ENCODE measurements at regions of chr2 and their contacts with region 1.

Region 1: GRCh38 chr2:212005085-212005671 is 533.4 kb downstream of the ERBB4 start:
- DNase-seq: no peak
- ATAC-seq: peak; percentile 89
- H3K4me3 ChIP-seq: no peak overlapping the region
- H3K27ac ChIP-seq: no peak overlapping the region
- H3K4me1 ChIP-seq: no peaks in the 10 kb centered on the region
- H3K27me3 ChIP-seq: no peaks in the 10 kb centered on the region
- CTCF ChIP-seq: peak; percentile 51 to 62 (median 51)
- EP300 ChIP-seq: no peak
- POLR2A ChIP-seq: no peak
- RAD21 ChIP-seq: peak; percentile 70

Region 2: GRCh38 chr2:211745295-211746097 is 259.7 kb before region 1 on chr2:
- CTCF ChIA-PET with region 1: interaction called, 3 read pairs
- POLR2A ChIA-PET with region 1: no interaction called
- RAD21 ChIA-PET with region 1: interaction called, 4 read pairs
- SMC1A ChIA-PET with region 1: interaction called, 4 read pairs
- in situ Hi-C with region 1: no loop called
- intact Hi-C with region 1: loop called (anchors 10 kb)
- DNase-seq: no peak
- ATAC-seq: peak; percentile 94
- H3K4me3 ChIP-seq: no peak overlapping the region
- H3K27ac ChIP-seq: no peak overlapping the region
- H3K4me1 ChIP-seq: no peaks in the 10 kb centered on the region
- H3K27me3 ChIP-seq: no peaks in the 10 kb centered on the region; a peak in 1 of 4 replicates
- CTCF ChIP-seq: peak; percentile 78 to 87 (median 86)
- EP300 ChIP-seq: no peak
- POLR2A ChIP-seq: no peak
- RAD21 ChIP-seq: peak; percentile 97

Region 3: DNA sequence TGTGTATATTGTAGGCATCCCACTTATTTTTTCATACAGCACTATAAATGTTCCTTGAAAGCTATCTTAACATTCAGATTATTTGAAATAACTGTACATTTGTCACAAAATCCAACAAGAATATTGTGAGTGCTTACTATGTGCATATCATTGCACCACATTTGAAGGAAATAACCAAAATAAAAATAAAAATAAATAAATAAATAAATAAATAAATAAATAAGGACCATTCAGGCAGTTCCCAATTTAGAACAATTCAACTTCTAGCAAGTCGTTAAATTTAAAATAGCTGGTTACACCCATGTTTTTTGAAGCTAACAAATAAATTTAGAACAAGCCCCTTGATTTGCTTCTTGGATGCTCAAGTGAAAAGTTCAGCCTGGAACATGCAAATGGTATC is 14.8 kb before region 1 on chr2:
- CTCF ChIA-PET with region 1: interaction called, 16 read pairs
- POLR2A ChIA-PET with region 1: no interaction called
- RAD21 ChIA-PET with region 1: interaction called, 3 read pairs
- SMC1A ChIA-PET with region 1: interaction called, 11 read pairs
- in situ Hi-C with region 1: no loop called
- intact Hi-C with region 1: no loop called
- DNase-seq: no peak
- ATAC-seq: no peak
- H3K4me3 ChIP-seq: no peak overlapping the region
- H3K27ac ChIP-seq: no peak overlapping the region
- H3K4me1 ChIP-seq: no peaks in the 10 kb centered on the region
- H3K27me3 ChIP-seq: no peaks in the 10 kb centered on the region
- CTCF ChIP-seq: no peak
- EP300 ChIP-seq: no peak
- POLR2A ChIP-seq: no peak
- RAD21 ChIP-seq: no peak

Region 4: GRCh38 chr2:212027681-212028628 is 22.8 kb after region 1 on chr2:
- CTCF ChIA-PET with region 1: interaction called, 15 read pairs
- POLR2A ChIA-PET with region 1: no interaction called
- RAD21 ChIA-PET with region 1: interaction called, 8 read pairs
- SMC1A ChIA-PET with region 1: interaction called, 6 read pairs
- in situ Hi-C with region 1: no loop called
- intact Hi-C with region 1: no loop called
- DNase-seq: no peak
- ATAC-seq: peak; percentile 72
- H3K4me3 ChIP-seq: no peak overlapping the region
- H3K27ac ChIP-seq: no peak overlapping the region
- H3K4me1 ChIP-seq: no peaks in the 10 kb centered on the region
- H3K27me3 ChIP-seq: no peaks in the 10 kb centered on the region
- CTCF ChIP-seq: no peak
- EP300 ChIP-seq: no peak
- POLR2A ChIP-seq: no peak
- RAD21 ChIP-seq: no peak

Region 5: GRCh38 chr2:212147921-212148513 is 142.8 kb after region 1 on chr2:
- CTCF ChIA-PET with region 1: interaction called, 6 read pairs
- POLR2A ChIA-PET with region 1: no interaction called
- RAD21 ChIA-PET with region 1: interaction called, 6 read pairs
- SMC1A ChIA-PET with region 1: interaction called, 10 read pairs
- in situ Hi-C with region 1: no loop called
- intact Hi-C with region 1: no loop called
- DNase-seq: no peak
- ATAC-seq: no peak
- H3K4me3 ChIP-seq: no peak overlapping the region
- H3K27ac ChIP-seq: no peak overlapping the region
- H3K4me1 ChIP-seq: no peaks in the 10 kb centered on the region
- H3K27me3 ChIP-seq: no peaks in the 10 kb centered on the region; a peak in 1 of 4 replicates
- CTCF ChIP-seq: peak in 1 of 3 experiments; percentile 25; a peak in 2 of 6 replicates
- EP300 ChIP-seq: no peak
- POLR2A ChIP-seq: no peak
- RAD21 ChIP-seq: no peak

Region 6: DNA sequence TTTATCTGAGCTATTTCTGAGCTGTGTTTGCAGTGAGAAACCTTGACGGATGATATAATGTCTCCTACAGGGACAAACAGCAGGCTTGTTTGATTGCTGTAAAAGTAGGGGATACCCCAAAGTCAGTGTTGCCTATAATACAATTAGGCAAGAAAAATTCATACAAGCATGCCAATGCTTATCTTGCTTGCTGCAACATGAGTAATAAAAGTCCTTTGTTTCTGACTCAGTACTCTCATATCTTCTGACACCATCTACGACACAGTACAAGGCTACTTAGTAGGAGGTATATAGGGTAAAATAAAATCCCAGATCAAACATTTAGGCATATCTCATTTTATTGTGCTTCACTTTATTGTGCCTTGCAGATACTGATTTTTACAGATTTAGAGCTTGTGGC is 500.4 kb after region 1 on chr2:
- CTCF ChIA-PET with region 1: no interaction called
- POLR2A ChIA-PET with region 1: no interaction called
- RAD21 ChIA-PET with region 1: no interaction called
- SMC1A ChIA-PET with region 1: no interaction called
- in situ Hi-C with region 1: no loop called
- intact Hi-C with region 1: no loop called
- DNase-seq: no peak
- ATAC-seq: peak; percentile 74
- H3K4me3 ChIP-seq: no peak overlapping the region
- H3K27ac ChIP-seq: no peak overlapping the region
- H3K4me1 ChIP-seq: no peaks in the 10 kb centered on the region
- H3K27me3 ChIP-seq: no peaks in the 10 kb centered on the region
- CTCF ChIP-seq: no peak
- EP300 ChIP-seq: no peak
- POLR2A ChIP-seq: no peak
- RAD21 ChIP-seq: no peak

Region 7: GRCh38 chr2:212520340-212520739 is 515.2 kb after region 1 on chr2:
- CTCF ChIA-PET with region 1: interaction called, 11 read pairs
- POLR2A ChIA-PET with region 1: no interaction called
- RAD21 ChIA-PET with region 1: no interaction called
- SMC1A ChIA-PET with region 1: no interaction called
- in situ Hi-C with region 1: no loop called
- intact Hi-C with region 1: no loop called
- DNase-seq: no peak
- ATAC-seq: no peak
- H3K4me3 ChIP-seq: no peak overlapping the region
- H3K27ac ChIP-seq: no peak overlapping the region
- H3K4me1 ChIP-seq: no peaks in the 10 kb centered on the region
- H3K27me3 ChIP-seq: no peaks in the 10 kb centered on the region
- CTCF ChIP-seq: peak; percentile 18 to 54 (median 21); a peak in 2 of 6 replicates
- EP300 ChIP-seq: no peak
- POLR2A ChIP-seq: no peak
- RAD21 ChIP-seq: peak; percentile 59